Left cardiac atrium (tissue), 4 donors: ENCODE measurements at regions of chr3 and their contacts with region 1.

Region 1: GRCh38 chr3:158434412-158435038 is 136.5 kb upstream of the MLF1 start:
- DNase-seq: peak; percentile 57
- ATAC-seq: peak; percentile 76 to 83

Region 2: GRCh38 chr3:157618075-157618760 is 816.3 kb before region 1 on chr3:
- intact Hi-C with region 1: loop called (anchors 5 to 10 kb)
- DNase-seq: no peak
- ATAC-seq: peak; percentile 26 to 34

Region 3: GRCh38 chr3:158091531-158091930 is 343.0 kb before region 1 on chr3:
- intact Hi-C with region 1: loop called in 1 of 2 experiments (anchors 5 kb)
- DNase-seq: no peak
- ATAC-seq: no peak

Region 4: DNA sequence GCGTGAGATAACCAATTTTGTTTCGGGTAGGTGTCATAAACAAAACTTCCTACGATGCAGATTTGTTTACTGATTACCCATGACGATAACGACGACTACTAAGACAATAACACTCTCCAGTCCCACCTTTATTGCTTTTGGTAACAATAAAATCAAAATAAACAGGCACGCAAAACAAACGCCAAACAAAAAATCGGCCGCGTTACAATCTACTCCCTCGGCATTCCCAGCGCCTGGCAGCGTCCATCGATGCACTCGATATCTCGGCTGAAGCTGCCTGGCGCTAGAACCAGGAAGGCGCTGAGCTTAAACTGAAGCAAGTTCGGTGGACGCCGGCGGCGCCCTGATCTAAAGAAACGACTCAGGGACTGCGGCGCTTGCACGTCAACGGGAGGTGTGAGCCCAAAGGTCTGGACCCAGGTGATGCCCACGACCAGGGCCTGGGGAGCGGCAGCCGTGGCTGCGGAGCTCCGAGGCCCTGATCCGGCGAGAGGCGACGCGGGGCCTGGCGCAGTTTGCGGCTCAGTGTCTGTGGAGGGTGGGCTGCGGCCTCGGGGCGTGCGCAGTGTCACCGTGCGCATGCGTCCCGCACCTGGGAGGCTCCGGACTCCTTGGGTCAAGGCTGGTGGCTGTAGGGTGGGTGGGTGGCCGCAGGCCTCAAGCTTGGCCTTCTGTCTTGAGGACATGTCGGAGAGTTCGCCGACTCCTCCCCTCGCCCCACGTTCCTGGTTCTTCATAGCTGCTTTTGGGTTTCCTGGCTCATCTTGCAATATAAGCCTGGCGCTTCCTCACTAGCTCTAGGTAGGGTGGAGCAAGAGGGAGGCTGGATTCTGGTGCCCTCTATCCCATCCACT is 324.5 kb before region 1 on chr3 and contains the start of gene RSRC1:
- intact Hi-C with region 1: loop called in 1 of 2 experiments (anchors 5 kb)
- DNase-seq: peak; percentile 89
- ATAC-seq: peak; percentile 88 to 94
- total RNA-seq, gene RSRC1: 22.6 to 23.6 TPM